BJ (cell line): ENCODE measurements at regions of chr11 and their contacts with region 1.

Region 1: DNA sequence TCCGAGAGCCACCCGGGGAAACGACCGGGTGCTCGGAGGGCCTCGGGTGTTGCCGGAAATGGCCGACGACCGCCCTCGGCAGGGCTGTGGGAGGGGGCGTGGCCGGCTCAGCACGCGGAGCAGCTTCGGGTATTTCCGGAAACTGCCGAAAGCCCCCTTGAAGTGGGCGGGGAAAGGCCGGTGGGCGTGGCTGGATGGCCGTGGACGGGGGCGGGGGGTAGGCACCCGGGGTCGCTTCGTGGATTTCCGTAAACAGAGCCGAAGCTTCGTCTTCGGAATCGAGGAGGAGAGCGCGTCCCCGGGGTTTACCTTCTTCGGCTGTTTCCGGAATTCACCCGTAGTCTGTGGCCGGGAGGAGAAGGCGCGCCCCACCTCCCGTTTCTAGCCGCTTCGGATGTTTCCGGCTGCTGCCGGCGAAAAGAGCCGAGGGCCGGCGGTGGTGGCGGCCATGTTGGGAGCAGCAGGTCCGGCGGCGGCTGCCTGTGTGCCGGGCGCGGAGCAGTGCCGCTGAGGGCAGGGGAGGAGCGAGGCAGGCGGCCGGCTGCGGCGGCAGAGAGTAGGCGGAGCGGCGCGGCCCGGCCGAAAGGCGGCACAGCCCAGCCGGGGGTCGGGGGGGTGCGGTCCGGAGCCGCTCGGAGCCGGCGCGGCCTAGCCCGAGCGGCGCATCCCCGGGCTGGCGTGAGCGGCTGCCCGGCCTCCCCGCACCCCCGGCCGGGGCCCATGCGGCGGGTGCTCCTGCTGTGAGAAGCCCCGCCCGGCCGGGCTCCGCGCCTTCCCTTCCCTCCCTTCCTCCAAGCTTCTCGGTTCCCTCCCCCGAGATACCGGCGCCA is at the start of gene MARK2:
- DNase-seq: peak; percentile 74
- H3K4me3 ChIP-seq: peak within 1 kb of the TSS; percentile 92
- H3K27me3 ChIP-seq: no peaks in the 10 kb centered on the region
- CTCF ChIP-seq: no peak
- polyA plus RNA-seq, gene MARK2: 11.1 and 13.8 TPM in 2 replicates

Region 2: GRCh38 chr11:63395697-63396096 is 443.2 kb before region 1 on chr11:
- CTCF ChIA-PET with region 1: no interaction called
- POLR2A ChIA-PET with region 1: no interaction called
- DNase-seq: no peak
- H3K4me3 ChIP-seq: no peak overlapping the region
- H3K27me3 ChIP-seq: no peaks in the 10 kb centered on the region
- CTCF ChIP-seq: no peak

Region 3: DNA sequence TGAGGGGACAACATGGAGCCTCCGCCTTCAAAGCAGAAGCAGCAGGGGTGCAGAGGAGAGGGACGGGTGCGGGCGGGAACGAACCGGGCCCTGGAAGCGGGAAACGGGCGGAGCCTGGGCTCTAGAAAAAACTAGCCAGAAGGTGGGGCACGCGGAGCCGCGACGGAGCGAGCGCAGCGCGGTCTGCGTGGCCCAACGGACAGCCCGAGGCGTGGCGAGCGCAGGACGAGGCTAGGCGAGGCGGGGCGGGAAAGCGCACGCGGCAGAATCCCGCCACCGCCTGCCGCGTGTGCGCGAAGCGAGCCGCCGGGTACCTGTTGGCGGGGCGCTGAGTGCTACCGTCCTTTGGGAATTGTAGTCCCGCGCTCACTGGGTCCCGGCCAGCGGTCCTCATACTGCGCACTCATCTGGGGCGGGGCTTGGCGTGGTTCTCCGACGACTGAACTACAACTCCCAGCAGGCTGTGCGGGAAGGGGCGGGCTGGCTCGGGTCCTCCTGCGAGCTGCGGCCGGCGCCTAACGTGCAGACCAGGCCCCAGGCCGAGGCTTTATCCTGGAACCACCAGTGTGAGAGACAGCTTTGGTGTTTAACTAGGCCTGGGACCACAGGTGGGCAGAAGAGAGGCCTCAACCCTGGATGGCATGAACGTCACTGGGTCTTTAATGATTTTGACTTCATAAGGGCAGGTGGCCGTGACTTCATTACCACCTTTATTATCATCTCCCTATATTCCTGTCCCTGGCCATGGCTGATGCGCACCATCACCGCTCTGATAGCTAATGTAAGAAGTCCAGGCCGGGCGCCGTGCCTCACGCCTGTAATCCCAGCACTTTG is 167.4 kb before region 1 on chr11 and contains the start of gene ATL3:
- CTCF ChIA-PET with region 1: no interaction called
- POLR2A ChIA-PET with region 1: no interaction called
- DNase-seq: peak; percentile 69
- H3K4me3 ChIP-seq: peak within 1 kb of the TSS; percentile 83
- H3K27me3 ChIP-seq: no peaks in the 10 kb centered on the region
- CTCF ChIP-seq: 0 out of 2 replicates have a peak, but pooled peaks have one; percentile 11
- polyA plus RNA-seq, gene ATL3: 36.1 and 64.8 TPM in 2 replicates

Region 4: DNA sequence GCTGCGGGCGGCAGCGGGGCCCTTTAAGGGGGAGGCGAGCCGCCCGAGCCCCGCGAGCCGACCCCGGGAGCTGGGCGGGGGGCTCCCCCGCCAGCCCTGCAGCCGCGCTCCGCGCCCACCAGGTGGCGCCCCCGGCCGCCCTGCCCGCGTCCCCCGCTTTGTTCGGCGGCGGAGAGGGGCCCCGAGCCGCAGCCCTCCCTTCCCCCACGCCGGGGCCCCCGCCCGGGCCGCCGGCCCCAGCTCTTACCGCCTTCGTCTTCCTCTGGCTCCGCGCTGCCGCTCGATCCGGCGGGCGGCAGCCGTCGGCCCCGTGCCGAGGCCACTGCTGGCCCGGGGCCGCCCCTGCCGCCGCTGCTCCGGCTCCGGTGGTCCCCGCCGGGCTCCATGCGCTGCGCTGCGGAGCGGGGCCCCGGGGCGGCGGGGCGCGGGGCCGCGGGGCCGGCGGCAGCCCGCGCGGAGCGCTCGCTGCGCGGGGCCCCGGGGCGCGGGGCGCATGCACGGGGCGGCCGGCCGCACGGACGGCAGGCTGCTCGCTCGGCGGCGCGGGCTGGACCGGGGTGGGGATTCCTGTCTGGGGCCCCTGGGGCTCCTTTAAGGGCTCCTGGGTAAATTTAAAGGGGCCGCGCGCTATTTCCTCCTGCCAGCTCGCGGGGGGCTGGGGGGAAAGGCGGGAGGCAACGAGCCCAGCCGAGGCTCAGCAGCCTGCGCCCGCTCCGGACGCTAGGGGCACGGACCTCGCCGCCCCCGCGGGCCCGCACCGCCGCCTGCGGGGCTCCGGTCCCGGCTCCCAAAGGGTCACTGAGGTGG is 70.5 kb before region 1 on chr11 and contains the start of gene ZFTA:
- CTCF ChIA-PET with region 1: interaction called, 18 read pairs
- POLR2A ChIA-PET with region 1: no interaction called
- DNase-seq: no peak
- H3K4me3 ChIP-seq: peak within 1 kb of the TSS; percentile 68
- H3K27me3 ChIP-seq: no peaks in the 10 kb centered on the region
- CTCF ChIP-seq: 0 out of 2 replicates have a peak, but pooled peaks have one; percentile 11
- polyA plus RNA-seq, gene ZFTA: 4.7 and 5.8 TPM in 2 replicates

Region 5: DNA sequence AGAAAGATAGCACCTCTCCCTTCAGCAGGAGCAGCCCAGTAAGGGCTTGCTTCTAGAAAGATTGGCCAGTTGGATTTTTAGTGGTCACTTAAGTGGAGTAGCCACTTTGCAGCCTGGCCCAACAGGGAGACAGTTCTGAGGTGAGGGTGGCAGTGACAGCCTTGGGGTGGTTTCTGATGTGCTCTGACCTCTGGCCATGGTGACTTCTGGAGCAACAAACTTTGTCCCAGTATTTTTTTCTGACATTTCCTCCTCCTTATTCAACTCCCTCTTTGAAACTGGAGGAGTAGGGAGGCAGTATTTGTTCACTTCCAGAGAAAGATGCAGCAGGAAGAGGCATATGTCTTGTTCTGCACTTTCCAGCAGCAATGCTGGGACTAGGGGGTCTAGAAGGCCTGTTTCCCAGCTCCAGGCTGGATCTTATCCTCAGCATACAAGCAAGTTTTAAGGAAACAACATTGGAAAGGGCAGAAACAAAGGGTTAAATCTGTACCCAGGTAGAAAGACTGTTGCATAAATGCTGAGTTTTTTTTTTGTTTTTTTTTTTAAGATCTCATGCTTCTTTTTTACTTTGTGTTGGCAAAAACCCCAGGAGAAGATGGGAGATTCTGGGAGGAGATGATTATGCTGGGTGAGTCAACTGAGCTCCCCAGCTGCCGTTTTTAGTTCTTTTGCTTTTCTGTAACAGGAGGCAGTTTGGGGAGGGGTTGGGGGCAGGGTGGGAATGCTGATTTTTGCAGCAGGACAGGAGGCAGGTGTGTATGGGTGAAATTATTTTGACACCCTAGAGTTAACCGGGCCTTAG is 40.9 kb after region 1 on chr11:
- CTCF ChIA-PET with region 1: interaction called, 11 read pairs
- POLR2A ChIA-PET with region 1: no interaction called
- DNase-seq: no peak
- H3K4me3 ChIP-seq: no peak overlapping the region
- H3K27me3 ChIP-seq: no peaks in the 10 kb centered on the region
- CTCF ChIP-seq: no peak

Region 6: GRCh38 chr11:63906585-63906984 is 67.7 kb after region 1 on chr11:
- CTCF ChIA-PET with region 1: interaction called, 13 read pairs
- POLR2A ChIA-PET with region 1: no interaction called
- DNase-seq: no peak
- H3K4me3 ChIP-seq: no peak overlapping the region
- H3K27me3 ChIP-seq: no peaks in the 10 kb centered on the region
- CTCF ChIP-seq: peak; percentile 40; the same call in 1 of the 2 replicates

Region 7: DNA sequence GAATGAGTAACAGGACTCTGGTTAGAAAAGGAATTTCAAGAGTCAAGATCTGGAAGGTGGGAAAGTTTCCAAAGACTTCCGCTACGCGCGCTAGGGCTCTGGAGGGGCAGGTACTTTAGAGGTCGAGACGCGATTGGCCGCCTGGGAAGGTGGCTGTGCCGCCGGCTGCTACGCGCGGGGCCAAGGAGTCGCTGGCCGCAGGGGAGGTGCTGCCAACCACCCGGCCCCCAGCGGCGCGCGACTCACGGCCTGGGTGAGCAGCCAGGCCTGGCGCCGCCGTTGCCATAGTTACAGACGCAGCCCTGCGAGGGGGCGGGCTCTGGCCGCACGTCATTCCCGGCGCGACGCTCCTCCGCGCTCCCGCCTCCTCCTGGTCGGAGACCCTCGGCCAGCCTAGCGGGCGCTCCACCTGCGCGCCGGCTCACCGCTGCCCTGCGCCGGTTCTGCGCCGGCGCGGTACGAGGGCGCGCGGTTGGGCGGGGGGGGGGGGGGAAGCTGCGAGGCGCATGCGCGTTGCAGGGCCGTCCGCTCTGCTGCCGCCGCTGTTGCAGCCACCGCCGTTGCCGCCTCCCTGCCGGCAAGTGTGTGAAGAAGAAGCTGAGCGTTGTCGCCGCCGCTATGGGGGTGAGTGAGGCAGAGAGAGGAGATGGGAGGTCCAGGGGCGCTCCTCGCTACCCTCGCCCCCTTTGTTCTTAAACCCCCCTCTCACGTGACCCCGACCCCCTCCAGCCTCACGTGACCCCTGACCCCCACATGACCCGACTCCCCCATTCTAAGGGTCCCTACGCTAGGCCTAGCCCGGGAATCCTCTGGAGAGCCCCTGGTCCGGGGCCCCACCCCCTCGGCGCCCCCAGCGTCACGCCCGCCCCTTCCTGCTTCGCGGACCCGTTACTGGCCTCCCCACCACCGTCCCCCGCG is 99.8 kb after region 1 on chr11 and contains the start of gene NAA40:
- CTCF ChIA-PET with region 1: interaction called, 188 read pairs
- POLR2A ChIA-PET with region 1: interaction called, 11 read pairs
- DNase-seq: peak; percentile 55
- H3K4me3 ChIP-seq: peak within 1 kb of the TSS; percentile 99
- H3K27me3 ChIP-seq: no peaks in the 10 kb centered on the region
- CTCF ChIP-seq: no peak
- polyA plus RNA-seq, gene NAA40: 10.8 and 16.1 TPM in 2 replicates

Region 8: DNA sequence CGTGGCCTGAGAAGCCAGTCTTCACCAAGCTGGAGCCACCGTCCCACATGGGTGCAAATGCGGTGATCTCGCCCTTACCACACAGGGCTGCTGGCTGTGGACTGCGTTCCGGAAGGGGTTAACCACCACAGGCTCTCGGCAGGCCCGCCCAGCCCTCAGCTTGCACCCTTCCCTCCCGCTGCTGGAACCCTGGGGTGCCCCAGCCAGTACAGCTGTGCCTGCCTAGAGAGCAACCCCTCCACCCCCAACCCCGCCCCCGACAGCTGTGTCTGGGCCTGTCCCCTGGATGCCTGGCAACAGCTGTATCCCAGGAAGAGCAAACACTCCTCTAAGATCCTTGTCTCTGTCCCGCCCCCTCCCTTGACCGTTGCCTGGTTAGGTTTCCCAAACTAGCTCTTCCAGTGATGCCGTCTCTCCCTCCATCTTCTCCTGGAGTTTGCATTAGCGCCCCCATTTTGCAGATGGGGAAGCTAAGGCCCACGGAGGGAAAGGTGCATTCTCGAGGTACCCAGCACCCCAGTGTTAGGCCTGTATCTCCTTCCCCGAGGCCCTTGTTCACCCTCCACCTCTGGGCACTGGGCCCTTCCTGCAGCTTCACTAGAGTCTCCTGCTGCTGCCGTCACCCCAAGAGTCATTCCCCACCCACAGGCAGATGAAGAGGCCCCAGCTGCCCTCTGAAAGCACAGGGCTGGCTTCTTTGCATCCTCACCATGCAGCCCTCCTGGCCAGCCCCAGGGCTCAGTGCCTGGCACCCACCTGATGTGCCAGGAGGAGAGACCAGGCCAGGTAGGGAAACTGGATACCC is 122.9 kb after region 1 on chr11:
- CTCF ChIA-PET with region 1: interaction called, 19 read pairs
- POLR2A ChIA-PET with region 1: interaction called, 3 read pairs
- DNase-seq: no peak
- H3K4me3 ChIP-seq: no peak overlapping the region
- H3K27me3 ChIP-seq: no peaks in the 10 kb centered on the region
- CTCF ChIP-seq: no peak